HEK293 (cell line): ENCODE measurements at regions of chr7 and their contacts with region 1.

Region 1: GRCh38 chr7:105887569-105888189 is 11.3 kb upstream of the ATXN7L1 start:
- H3K4me3 ChIP-seq: no peak overlapping the region
- H3K27ac ChIP-seq: no peak overlapping the region
- H3K4me1 ChIP-seq: peaks cover 7% of the 10 kb centered on the region
- CTCF ChIP-seq: no peak

Region 2: DNA sequence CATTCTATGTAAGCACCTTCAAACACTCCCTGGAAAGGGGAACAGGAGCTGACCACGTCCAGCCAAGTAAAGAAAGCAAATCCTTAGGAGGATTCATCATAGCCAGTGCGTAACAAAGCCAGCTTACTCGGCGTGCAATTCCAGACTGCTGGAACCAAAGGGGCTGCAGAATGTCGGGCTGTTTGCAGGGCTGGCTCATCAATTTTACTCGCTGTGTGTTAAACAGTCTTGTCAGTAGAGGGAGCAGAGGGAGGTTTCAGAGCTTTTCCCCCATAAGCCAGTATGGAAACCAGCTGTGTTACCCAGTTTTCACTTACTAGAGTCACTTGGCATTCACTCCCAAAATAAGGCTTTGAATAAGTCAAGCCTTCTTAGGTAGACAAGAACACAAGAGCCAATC is 746.6 kb before region 1 on chr7:
- CTCF ChIA-PET with region 1: no interaction called
- POLR2A ChIA-PET with region 1: no interaction called
- H3K4me3 ChIP-seq: no peak overlapping the region
- H3K27ac ChIP-seq: no peak overlapping the region
- H3K4me1 ChIP-seq: no peaks in the 10 kb centered on the region
- CTCF ChIP-seq: no peak

Region 3: DNA sequence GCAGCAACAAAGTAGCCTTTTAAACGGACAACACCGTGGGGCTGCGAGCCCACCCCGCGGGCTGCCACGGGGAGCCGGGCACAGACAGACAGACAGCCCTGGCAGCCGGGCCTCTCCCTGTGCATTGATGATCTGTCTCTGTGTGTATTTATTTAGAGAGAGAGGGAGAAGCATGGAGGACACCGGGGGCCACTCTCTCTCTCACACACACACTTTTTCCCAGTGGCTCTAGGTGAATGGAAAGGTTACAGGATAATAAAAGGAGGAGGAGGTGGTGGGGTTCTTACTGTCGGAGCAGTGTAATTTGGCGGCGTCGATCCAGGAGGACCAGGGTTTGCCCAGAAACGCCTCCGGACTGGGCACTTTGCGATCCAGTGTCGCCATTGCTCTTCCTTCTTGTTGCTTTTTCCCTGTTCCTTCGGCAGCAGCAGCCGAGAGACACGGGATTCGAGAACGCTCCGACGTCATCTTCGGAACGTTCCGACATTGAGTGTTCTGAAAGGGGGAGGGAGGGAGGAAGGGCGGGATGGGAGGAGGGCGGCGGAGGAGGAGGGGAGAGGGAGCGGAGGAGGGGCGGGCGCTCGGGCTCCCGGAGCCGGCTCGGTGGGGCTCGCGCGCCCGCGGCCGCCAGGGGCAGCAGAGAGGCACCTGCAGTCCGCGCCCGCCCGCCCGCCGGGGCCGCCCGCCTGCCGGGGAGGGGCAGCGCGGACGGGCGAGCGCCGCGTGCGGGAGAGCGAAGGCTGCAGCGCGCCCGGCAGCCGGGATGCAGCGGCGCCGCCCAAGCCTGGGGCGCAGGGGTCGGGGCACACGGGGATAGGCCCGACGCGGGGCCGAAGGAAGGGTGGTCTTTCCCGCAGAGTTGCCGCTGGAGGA is 11.4 kb before region 1 on chr7 and contains the start of gene ATXN7L1:
- CTCF ChIA-PET with region 1: interaction called, 19 read pairs
- POLR2A ChIA-PET with region 1: interaction called, 4 read pairs
- H3K4me3 ChIP-seq: peak within 1 kb of the TSS; percentile 89
- H3K27ac ChIP-seq: peak within 1 kb of the TSS; percentile 62
- H3K4me1 ChIP-seq: peaks cover 5% of the 10 kb centered on the region
- CTCF ChIP-seq: no peak

Region 4: DNA sequence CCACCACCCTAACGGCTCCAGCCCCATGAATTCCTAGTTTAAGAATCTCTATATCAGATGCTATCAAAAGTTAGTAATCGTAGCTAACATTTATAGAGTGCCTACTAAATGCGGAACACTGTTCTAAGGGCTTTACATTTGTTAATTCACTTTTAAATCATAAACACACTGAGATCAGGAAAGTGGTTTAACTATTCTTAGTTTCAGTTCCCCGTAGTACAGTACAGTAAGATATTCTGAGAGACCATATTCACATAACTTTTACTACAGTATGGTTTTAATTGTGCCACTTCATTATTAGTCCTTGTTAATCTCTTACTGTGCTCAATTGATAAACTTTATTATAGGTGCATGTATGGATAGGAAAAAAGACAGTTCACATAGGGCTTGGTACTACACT is 202.0 kb after region 1 on chr7:
- CTCF ChIA-PET with region 1: no interaction called
- POLR2A ChIA-PET with region 1: no interaction called
- H3K4me3 ChIP-seq: no peak overlapping the region
- H3K27ac ChIP-seq: no peak overlapping the region
- H3K4me1 ChIP-seq: 0 out of 2 replicates have a peak, but pooled peaks cover 2% of the 10 kb centered on the region
- CTCF ChIP-seq: no peak